PC-3 (cell line): ENCODE measurements at regions of chr11 and their contacts with region 1.

Region 1: GRCh38 chr11:106424111-106424510 is 346.6 kb downstream of the AASDHPPT start:
- DNase-seq: peak; percentile 98
- ATAC-seq: peak; percentile 93
- H3K4me3 ChIP-seq: 0 out of 2 replicates have a peak overlapping the region, but pooled peaks have one; percentile 2
- H3K27ac ChIP-seq: peak overlapping the region; percentile 56
- H3K4me1 ChIP-seq: peaks cover 52% of the 10 kb centered on the region
- H3K27me3 ChIP-seq: no peaks in the 10 kb centered on the region
- CTCF ChIP-seq: no peak

Region 2: GRCh38 chr11:105781807-105782206 is 642.3 kb before region 1 on chr11:
- CTCF ChIA-PET with region 1: no interaction called
- POLR2A ChIA-PET with region 1: no interaction called
- intact Hi-C with region 1: no loop called
- DNase-seq: no peak
- ATAC-seq: no peak
- H3K4me3 ChIP-seq: no peak overlapping the region
- H3K27ac ChIP-seq: no peak overlapping the region
- H3K4me1 ChIP-seq: no peaks in the 10 kb centered on the region
- H3K27me3 ChIP-seq: no peaks in the 10 kb centered on the region
- CTCF ChIP-seq: no peak

Region 3: DNA sequence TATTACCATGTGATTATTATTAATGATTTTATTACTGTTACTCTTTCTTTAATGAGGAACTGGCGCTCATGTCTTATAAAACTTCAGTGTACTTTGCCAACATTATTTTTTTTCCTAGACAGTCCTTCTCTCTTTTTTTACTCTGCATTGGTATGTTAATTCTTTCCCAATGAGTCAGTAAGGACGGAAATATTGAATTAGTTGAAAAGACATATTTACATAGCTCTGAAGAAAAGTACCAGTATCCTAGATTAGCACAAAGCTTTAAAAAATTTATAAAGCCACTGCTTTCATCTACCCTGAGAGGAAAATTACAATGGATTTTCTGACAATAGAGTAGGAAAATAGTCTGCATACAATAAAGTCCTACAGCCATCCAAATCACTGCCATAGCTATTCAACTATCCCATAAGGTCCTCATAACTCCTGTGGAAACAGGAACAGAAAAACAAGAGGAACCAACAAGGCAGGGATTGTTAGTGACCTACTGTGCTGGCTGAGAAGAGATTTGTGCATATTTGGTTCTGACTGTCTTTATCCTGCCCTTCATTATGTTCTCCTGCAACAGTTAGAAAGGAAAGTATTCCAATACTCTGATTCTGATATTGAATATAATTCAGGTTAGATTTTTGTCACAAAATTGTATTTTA is 32.2 kb before region 1 on chr11:
- CTCF ChIA-PET with region 1: no interaction called
- POLR2A ChIA-PET with region 1: interaction called, 3 read pairs
- intact Hi-C with region 1: loop called (anchors 5 kb)
- DNase-seq: peak; percentile 89
- ATAC-seq: peak; percentile 80
- H3K4me3 ChIP-seq: peak overlapping the region; percentile 14; the same call in 1 of the 2 replicates
- H3K27ac ChIP-seq: peak overlapping the region; percentile 76
- H3K4me1 ChIP-seq: peaks cover 45% of the 10 kb centered on the region
- H3K27me3 ChIP-seq: no peaks in the 10 kb centered on the region
- CTCF ChIP-seq: no peak

Region 4: GRCh38 chr11:106644824-106645223 is 220.7 kb after region 1 on chr11:
- CTCF ChIA-PET with region 1: no interaction called
- POLR2A ChIA-PET with region 1: no interaction called
- intact Hi-C with region 1: no loop called
- DNase-seq: peak; percentile 57
- ATAC-seq: no peak
- H3K4me3 ChIP-seq: no peak overlapping the region
- H3K27ac ChIP-seq: no peak overlapping the region
- H3K4me1 ChIP-seq: peaks cover 19% of the 10 kb centered on the region
- H3K27me3 ChIP-seq: no peaks in the 10 kb centered on the region
- CTCF ChIP-seq: no peak